ENCODE measurements at regions of chr14 and their contacts with region 1.

Region 1: DNA sequence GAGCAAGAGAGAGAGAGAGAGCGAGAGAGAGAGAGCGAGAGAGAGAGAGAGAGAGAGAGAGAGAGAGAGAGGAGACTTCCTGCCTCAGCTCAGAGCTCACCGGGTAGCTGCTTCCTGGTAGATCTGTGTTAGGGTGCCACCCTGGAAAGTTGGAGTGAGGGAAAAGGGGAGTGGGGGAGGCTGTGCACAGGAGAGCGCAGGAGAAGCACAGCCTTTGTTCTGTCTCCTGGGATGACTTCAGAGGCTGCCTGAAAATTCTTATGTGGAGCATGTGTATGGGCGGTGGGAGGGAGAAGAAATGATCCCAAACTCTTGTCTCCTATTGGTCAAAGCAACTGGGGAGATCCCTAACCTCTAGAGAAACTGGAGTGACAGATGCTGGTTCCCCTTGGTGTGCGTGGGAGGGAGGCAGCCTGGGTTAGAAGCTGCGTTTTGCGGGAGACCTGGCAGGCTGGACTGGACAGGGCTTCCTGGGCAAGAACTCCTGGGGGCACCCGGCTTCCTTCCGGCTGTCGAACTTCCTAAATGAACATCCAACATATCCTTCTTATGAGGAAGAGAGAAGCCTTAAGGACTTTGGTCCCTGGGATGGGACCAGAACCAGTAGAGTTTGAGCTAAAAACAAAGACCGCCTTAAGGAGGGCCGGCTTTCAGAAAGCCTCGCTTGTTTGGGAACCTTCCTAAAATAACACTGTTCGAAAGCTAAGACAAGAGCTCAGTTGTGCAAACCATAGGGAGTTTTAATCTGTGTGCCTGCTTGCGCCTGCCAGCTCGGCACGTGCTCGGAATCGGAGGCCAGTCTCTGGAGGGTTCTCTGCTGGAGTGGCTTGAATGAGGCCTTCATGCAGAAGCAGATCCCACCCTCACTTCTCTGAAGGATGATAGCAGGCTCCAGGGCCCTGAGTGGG is 30.4 kb upstream of the BEGAIN start:
- H3K4me3 Mint-ChIP-seq: peak overlapping the region; percentile 10
- H3K27ac Mint-ChIP-seq: peak overlapping the region; percentile 77
- H3K4me1 Mint-ChIP-seq: peaks cover 63% of the 10 kb centered on the region
- H3K27me3 Mint-ChIP-seq: peaks cover 51% of the 10 kb centered on the region

Region 2: DNA sequence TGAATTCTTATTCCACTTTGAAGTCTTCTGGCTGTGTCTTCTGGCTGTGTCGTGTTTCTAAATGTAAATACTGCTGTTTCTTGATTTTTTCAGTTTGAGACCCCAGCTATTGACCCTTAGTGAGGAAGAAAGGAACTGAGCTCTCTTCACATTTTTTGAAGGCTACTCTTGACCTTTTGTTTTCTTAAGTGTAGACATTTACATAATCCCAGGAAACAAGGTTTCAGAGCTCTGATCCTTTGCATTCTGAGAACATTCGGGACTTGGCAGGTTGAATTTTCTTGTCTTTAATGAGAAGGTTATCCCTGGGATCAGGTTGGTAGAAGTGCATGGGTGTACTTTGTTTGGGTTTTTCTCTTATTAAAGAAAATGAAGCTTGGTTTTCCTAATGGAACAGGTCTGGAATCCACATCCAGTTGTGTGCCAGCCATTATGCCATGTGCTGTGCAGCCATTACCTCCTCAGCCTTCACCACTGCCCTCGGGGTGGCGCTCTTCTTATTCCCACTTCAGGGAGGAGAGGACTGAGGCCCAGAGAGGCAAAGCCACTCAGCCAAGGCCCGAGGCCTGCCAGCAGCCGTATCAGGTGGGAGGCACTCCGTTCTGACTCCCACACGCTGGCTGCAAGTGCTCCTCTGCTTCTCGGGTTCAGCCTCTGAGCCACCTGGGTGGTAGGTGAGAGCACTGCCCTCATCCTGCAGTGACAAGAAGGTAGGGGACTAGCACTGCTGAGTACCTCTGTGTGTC is 151.4 kb before region 1 on chr14:
- intact Hi-C with region 1: no loop called
- H3K4me3 Mint-ChIP-seq: no peak overlapping the region
- H3K27ac Mint-ChIP-seq: no peak overlapping the region
- H3K4me1 Mint-ChIP-seq: peaks cover 12% of the 10 kb centered on the region
- H3K27me3 Mint-ChIP-seq: peaks cover 2% of the 10 kb centered on the region

Region 3: GRCh38 chr14:100547633-100548294 is 69.9 kb before region 1 on chr14:
- intact Hi-C with region 1: loop called (anchors 5 kb)
- H3K4me3 Mint-ChIP-seq: peak overlapping the region; percentile 39
- H3K27ac Mint-ChIP-seq: peak overlapping the region; percentile 80
- H3K4me1 Mint-ChIP-seq: peaks cover 39% of the 10 kb centered on the region
- H3K27me3 Mint-ChIP-seq: peaks cover 50% of the 10 kb centered on the region

Region 4: GRCh38 chr14:100567009-100567876 is 50.4 kb before region 1 on chr14:
- intact Hi-C with region 1: no loop called
- H3K4me3 Mint-ChIP-seq: peak overlapping the region; percentile 43
- H3K27ac Mint-ChIP-seq: no peak overlapping the region
- H3K4me1 Mint-ChIP-seq: peaks cover 13% of the 10 kb centered on the region
- H3K27me3 Mint-ChIP-seq: peaks cover 88% of the 10 kb centered on the region